ENCODE measurements at regions of chr12 and their contacts with region 1.

Region 1: DNA sequence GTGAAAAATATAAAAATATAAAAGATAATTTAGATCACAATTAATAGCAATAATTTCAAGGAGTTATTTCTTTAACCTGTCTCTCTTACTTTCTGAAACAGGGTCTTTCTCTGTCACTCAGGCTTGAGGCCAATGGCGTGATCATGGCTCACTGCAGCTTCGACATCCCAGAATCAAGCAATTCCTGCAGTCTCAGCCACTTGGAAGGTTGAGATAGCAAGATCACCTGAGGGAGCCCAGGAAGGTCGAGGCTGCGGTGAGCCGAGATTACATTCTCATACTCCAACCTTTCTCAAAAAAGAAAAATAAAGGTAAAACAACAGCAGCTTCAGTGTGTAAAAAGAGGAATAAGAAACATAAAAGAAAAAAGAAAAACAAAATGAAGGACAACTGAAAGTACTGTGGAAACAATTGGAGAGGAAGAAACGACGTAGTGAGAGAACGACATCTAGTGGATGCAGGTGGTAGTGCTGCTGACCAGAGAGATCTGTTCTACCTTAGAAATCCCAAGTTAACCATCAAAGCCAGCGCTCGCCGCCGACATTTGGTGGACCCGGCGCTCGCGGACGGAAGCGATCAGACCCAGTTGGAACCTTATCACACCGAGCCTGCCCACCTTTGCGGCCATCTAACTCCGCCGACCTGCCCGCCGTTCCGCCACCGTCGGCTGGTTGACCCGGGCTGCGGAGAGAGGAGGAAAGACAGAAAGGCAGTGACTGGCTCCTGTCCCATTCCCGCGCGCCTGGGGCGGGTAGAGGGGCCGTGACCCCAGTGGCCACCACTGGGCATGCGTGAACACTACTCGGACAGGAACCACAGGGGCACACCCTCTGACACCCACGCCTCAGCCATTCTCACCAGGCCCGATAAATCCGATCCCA is 196.1 kb downstream of the ALG10 start:
- DNase-seq: peak; percentile 64
- ATAC-seq: peak; percentile 90
- H3K4me3 ChIP-seq: peak overlapping the region; percentile 24 to 61 (median 32); a peak in 5 of 6 replicates
- H3K27ac ChIP-seq: no peak overlapping the region
- H3K4me1 ChIP-seq: no peaks in the 10 kb centered on the region
- H3K27me3 ChIP-seq: no peaks in the 10 kb centered on the region; a peak in 2 of 5 replicates
- CTCF ChIP-seq: peak; percentile 84
- EP300 ChIP-seq: no peak
- POLR2A ChIP-seq: no peak
- RAD21 ChIP-seq: peak; percentile 46; the same call in 1 of the 2 replicates

Region 2: GRCh38 chr12:32947206-32948067 is 1271.0 kb before region 1 on chr12:
- CTCF ChIA-PET with region 1: no interaction called
- POLR2A ChIA-PET with region 1: no interaction called
- in situ Hi-C with region 1: loop called (anchors 25 kb)
- intact Hi-C with region 1: no loop called
- DNase-seq: peak; percentile 9
- ATAC-seq: 0 out of 3 replicates have a peak, but pooled peaks have one; percentile 31
- H3K4me3 ChIP-seq: no peak overlapping the region
- H3K27ac ChIP-seq: no peak overlapping the region
- H3K4me1 ChIP-seq: no peaks in the 10 kb centered on the region
- H3K27me3 ChIP-seq: no peaks in the 10 kb centered on the region
- CTCF ChIP-seq: peak; percentile 36
- EP300 ChIP-seq: no peak
- POLR2A ChIP-seq: no peak
- RAD21 ChIP-seq: no peak

Region 3: DNA sequence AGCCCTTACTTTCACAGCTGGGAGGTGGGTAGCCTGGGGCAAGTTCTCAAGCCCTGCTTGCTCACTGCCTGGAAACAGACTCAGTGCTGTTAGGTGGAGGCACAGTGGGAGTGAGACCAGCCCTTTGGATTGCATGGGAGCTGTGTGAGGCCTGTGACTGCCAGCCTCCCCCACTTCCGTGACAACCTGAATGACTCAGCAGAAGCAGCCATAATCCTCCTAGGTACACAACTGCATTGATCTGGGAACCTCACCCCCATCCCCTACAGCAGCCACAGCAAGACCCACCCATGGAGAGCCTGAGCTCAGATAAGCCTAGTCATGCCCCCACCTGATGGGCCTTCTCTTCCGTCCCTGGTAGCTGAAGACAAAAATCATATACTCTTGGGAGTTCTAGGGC is 169.7 kb before region 1 on chr12:
- CTCF ChIA-PET with region 1: no interaction called
- POLR2A ChIA-PET with region 1: no interaction called
- in situ Hi-C with region 1: loop called (anchors 10 kb)
- intact Hi-C with region 1: no loop called
- DNase-seq: peak; percentile 6
- ATAC-seq: no peak; the same call in 1 of the 3 replicates
- H3K4me3 ChIP-seq: no peak overlapping the region; a peak in 1 of 6 replicates
- H3K27ac ChIP-seq: no peak overlapping the region
- H3K4me1 ChIP-seq: peaks cover 16% of the 10 kb centered on the region
- H3K27me3 ChIP-seq: no peaks in the 10 kb centered on the region
- CTCF ChIP-seq: no peak
- EP300 ChIP-seq: no peak
- POLR2A ChIP-seq: no peak
- RAD21 ChIP-seq: no peak

Region 4: GRCh38 chr12:34126239-34126641 is 92.2 kb before region 1 on chr12:
- CTCF ChIA-PET with region 1: interaction called, 29 read pairs
- POLR2A ChIA-PET with region 1: no interaction called
- in situ Hi-C with region 1: loop called (anchors 5 kb)
- intact Hi-C with region 1: loop called (anchors 1 kb)
- DNase-seq: peak; percentile 1
- ATAC-seq: peak; percentile 76
- H3K4me3 ChIP-seq: peak overlapping the region; percentile 44 to 62 (median 56)
- H3K27ac ChIP-seq: no peak overlapping the region
- H3K4me1 ChIP-seq: no peaks in the 10 kb centered on the region
- H3K27me3 ChIP-seq: no peaks in the 10 kb centered on the region
- CTCF ChIP-seq: no peak
- EP300 ChIP-seq: no peak
- POLR2A ChIP-seq: no peak
- RAD21 ChIP-seq: no peak

Region 5: GRCh38 chr12:34233618-34234017 is 15.2 kb after region 1 on chr12:
- CTCF ChIA-PET with region 1: no interaction called
- POLR2A ChIA-PET with region 1: no interaction called
- in situ Hi-C with region 1: no loop called
- intact Hi-C with region 1: no loop called
- DNase-seq: no peak
- ATAC-seq: no peak
- H3K4me3 ChIP-seq: no peak overlapping the region
- H3K27ac ChIP-seq: no peak overlapping the region
- H3K4me1 ChIP-seq: no peaks in the 10 kb centered on the region
- H3K27me3 ChIP-seq: no peaks in the 10 kb centered on the region
- CTCF ChIP-seq: no peak
- EP300 ChIP-seq: no peak
- POLR2A ChIP-seq: no peak
- RAD21 ChIP-seq: no peak

Measured in HepG2 (cell line).